Head of caudate nucleus (tissue), 42 donors: ENCODE measurements at regions of chr16 and their contacts with region 1.

Region 1: GRCh38 chr16:70380861-70381603 is 34.3 kb downstream of the DDX19A start:
- DNase-seq: peak; percentile 94 to 99 (median 97)

Region 2: GRCh38 chr16:70331588-70332358 is 49.3 kb before region 1 on chr16:
- intact Hi-C with region 1: no loop called
- DNase-seq: peak in 33 of 42 donors; percentile 9 to 65 (median 33)

Region 3: DNA sequence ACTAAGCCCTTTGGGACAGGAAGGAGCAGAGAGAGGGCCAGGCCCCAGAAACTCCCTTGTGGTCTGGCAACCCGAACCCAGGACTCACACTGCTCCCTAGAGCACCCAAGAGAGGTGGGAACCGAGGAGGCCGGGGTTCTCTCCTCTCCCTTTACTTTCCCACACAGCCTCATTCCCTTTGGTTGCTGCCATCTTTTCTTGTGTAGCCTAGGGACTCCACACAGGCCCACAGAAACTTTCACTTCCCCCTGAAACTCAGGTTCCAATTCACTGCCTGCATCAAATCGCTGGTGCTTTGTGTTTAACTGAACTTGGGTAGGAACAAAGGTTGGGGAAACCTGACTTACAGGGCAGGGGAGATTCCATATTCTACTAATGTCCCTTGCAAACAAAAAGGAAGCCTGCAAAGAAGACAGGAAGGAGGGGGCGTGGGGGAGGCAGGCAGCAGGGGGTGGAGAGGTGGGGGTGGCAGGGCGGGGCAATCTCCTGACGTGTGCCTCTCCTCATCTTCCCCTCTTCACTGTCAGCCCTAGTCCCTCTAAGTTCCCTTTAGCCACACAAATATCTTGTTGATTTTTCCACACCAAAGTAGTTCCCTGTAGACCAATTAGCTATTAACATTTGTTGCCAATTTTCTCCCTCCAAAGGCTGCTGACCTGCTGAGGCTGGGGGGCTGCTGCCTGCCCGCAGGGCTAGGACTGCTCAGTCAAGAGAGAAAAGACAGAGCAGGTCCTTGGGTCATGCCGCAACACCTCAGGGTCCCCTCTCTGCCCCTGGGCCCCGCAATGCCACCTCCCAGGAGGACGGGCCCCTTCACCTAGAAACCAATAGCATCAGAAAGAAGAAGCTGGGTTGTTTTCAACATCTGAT is 49.9 kb after region 1 on chr16:
- intact Hi-C with region 1: loop called (anchors 5 kb)
- DNase-seq: peak in 5 of 42 donors; percentile 23 to 56 (median 37)